ENCODE measurements at regions of chr5 and their contacts with region 1.

Region 1: DNA sequence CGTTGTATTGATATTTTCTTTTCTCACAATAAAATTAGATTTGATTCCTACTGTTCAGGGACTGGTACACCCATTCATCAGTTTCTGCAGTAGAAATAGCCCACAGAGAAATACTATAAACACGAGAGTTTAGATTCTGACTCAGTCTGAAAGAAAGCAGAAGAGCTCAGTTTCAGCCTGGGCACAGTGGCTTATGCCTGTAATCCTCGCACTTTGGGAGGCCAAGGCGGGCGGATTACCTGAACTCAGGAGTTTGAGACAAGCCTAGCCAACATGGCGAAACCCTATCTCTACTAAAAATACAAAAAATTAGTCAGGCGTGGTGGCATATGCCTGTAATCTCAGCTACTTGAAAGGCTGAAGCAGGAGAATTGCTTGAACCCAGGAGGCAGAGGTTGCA is 8.6 kb downstream of the ITK start:
- DNase-seq: peak; percentile 59
- ATAC-seq: peak; percentile 50
- H3K4me3 Mint-ChIP-seq: peak overlapping the region; percentile 96
- H3K27ac Mint-ChIP-seq: peak overlapping the region; percentile 84
- H3K4me1 Mint-ChIP-seq: peaks cover 82% of the 10 kb centered on the region
- H3K27me3 Mint-ChIP-seq: no peaks in the 10 kb centered on the region

Region 2: GRCh38 chr5:157204765-157205164 is 15.5 kb after region 1 on chr5:
- CTCF ChIA-PET with region 1: interaction called, 10 read pairs
- DNase-seq: no peak
- ATAC-seq: no peak
- H3K4me3 Mint-ChIP-seq: peak overlapping the region; percentile 11
- H3K27ac Mint-ChIP-seq: peak overlapping the region; percentile 86
- H3K4me1 Mint-ChIP-seq: peaks cover 89% of the 10 kb centered on the region
- H3K27me3 Mint-ChIP-seq: no peaks in the 10 kb centered on the region

Region 3: DNA sequence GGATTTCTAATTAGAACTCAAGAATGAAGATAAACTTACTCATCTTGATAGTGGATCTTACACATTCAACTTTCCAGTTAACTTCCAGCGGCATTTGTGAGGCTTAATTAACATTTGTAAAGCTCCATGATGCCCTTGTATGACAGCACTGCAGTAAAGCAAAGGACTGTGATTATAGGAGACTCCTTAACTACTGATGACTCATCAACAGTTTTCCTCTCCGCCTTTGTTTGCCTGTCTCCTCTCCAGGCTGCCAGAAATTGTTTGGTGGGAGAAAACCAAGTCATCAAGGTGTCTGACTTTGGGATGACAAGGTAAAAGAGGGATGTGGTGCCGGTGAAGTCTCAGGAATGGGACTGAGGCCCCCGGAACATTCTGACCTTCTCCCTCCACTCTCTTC is 56.3 kb after region 1 on chr5:
- CTCF ChIA-PET with region 1: no interaction called
- DNase-seq: no peak
- ATAC-seq: no peak
- H3K4me3 Mint-ChIP-seq: no peak overlapping the region
- H3K27ac Mint-ChIP-seq: peak overlapping the region; percentile 69
- H3K4me1 Mint-ChIP-seq: peaks cover 68% of the 10 kb centered on the region
- H3K27me3 Mint-ChIP-seq: no peaks in the 10 kb centered on the region

Measured in activated CD8-positive, alpha-beta memory T cell treated with anti-CD3 and anti-CD28 coated beads, Interleukin-2, amount 10 ng/mL, durations not matched to agents 7 days and 5 days (primary cell).